HEK293 (cell line): ENCODE measurements at regions of chr9 and their contacts with region 1.

Region 1: DNA sequence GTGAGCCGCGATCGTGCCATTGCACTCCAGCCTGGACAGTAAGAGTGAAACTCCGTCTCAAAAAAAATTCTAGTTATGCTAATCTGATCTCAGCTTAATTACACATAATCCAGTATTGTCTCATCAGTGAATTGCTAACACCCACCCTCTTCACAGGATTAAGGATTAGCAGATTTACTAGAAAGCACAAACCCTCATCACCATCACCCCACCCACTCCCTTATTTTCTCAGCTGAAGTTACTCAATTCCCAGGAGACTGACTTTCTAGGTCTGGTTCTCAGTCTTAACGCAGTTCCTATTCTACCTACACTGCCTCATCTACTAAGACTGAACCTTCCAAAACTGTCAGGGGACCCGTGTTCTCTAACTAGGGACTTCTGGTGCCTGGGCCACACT is 9.0 kb downstream of the TOR1B start:
- H3K4me3 ChIP-seq: no peak overlapping the region
- H3K27ac ChIP-seq: no peak overlapping the region
- H3K4me1 ChIP-seq: no peaks in the 10 kb centered on the region
- CTCF ChIP-seq: no peak

Region 2: DNA sequence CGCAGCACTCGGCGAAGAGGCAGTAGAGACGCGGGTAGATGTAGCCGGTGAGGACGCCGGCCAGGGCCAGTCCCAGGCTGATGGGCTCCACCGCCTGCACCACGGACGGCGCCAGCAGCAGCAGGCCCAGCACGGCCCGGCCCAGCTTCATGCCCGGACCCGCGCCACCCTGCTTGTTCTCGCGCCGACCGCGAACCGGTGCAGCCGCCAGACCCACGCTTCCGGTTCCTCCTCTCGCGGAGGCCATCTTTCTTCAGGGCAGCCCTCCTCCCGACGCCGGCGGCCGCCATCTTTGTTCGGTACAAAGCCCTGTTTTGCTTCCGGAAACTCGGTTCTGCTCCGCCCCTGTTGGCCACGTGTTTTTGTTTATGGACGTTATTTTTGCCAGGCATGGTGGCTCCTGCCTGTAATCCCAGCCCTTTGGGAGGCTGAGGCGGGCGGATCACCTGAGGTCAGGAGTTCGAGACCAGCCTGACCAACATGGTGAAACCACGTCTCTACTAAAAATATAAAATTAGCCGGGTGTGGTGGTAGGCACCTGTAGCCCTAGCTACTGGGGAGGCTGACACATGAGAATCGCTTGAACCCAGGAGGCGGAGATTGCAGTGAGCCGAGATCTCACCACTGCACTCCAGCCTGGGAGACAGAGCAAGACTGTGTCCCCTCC is 12.1 kb after region 1 on chr9 and contains the start of gene TOR1A:
- CTCF ChIA-PET with region 1: no interaction called
- POLR2A ChIA-PET with region 1: interaction called, 12 read pairs
- H3K4me3 ChIP-seq: peak within 1 kb of the TSS; percentile 98
- H3K27ac ChIP-seq: peak within 1 kb of the TSS; percentile 88
- H3K4me1 ChIP-seq: no peaks in the 10 kb centered on the region
- CTCF ChIP-seq: no peak

Region 3: DNA sequence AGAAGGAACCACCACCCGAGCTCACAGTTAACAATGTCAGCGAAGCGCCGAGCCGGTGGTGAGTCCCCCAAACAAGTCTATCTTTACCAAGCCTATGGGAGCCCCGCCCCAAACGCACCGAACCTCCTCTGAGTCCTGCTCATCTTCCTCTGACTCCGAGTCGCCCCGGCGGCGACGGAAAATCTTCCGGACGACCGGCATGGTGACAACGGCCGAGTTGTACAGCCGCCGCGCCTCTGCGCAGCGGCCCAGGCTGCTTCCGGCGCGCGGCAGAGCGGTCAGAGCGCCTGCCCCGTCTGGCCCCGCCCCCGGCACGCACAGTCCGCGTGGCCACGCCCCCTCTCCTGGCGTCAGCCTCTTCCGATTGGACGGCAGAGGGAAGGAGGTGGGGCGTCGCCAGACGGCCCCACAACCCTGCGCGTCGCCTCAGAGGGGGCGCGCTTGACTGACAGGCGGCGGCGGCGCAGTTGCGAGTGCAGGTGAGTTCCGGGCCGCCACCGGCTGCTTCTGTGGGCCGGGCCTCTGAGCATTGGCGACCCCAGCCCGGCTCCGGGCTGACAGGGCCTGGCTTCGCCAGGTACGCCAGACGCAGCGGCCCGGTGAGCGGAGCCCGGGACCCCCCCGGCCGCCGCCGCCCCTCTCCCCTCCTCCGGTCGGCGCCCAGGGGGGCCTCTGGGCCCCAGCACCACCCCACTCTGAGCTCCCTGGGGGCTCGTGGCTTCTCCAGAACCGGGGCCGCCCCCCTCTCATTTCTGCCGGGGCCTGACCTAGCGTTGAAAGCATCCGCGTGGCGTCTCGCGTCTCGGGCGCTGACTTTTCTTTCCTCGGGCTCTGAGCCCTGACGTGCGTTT is 23.3 kb after region 1 on chr9 and contains the starts of genes C9orf78 and USP20:
- CTCF ChIA-PET with region 1: interaction called, 3 read pairs
- POLR2A ChIA-PET with region 1: interaction called, 12 read pairs
- H3K4me3 ChIP-seq: peak within 1 kb of the TSS; percentile 63
- H3K27ac ChIP-seq: peak within 1 kb of the TSS; percentile 4; the same call in 1 of the 2 replicates
- H3K4me1 ChIP-seq: peaks cover 4% of the 10 kb centered on the region; the same call in 1 of the 2 replicates
- CTCF ChIP-seq: peak; percentile 35; the same call in 1 of the 2 replicates